B cell (primary cell): ENCODE measurements at regions of chr19 and their contacts with region 1.

Region 1: DNA sequence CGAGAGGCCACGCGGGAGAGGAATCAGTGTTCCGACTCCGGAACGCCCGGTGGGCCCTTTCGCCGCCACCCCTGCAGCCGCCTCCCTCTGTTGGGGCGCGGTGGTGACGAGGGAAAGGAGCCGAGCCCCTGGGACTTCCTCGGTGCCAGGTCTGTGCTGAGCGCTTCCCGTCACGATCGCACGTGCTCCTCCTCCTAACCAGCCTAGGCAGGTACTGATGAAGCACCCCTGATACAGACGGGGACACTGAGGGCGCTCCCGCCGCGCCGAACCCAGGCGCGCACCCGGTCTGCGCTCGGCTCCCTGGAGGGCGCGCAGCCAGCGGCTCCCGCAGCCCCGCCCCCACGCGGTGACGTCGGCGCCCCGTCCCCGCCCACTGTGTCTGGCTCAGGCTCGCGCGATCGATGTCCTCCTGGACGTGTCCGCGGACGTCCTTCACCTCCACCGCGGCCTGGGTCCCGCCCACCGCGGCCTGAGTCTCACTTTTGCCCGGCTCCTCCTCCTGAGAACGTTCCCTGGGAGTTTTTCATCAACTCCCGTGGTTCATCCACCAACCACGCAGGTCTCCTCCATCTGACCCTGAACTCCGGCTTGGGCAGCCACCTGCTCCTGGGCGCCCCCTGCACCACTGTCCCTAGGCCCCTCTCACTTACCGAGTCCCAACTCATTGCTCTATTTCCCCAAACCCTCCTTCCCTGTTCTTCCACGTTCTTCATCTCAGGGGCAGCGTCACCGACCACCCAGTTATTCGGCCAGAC is 2.6 kb upstream of the KLK15 start:
- DNase-seq: peak; percentile 84
- ATAC-seq: peak; percentile 94
- H3K4me3 ChIP-seq: peak overlapping the region in 4 of 5 experiments; percentile 51 to 67 (median 59)
- H3K4me3 Mint-ChIP-seq: peak overlapping the region; percentile 88
- H3K27ac ChIP-seq: no peak overlapping the region
- H3K27ac Mint-ChIP-seq: peak overlapping the region; percentile 73
- H3K4me1 ChIP-seq: peaks cover 11 to 14% of the 10 kb centered on the region in 2 donors
- H3K4me1 Mint-ChIP-seq: peaks cover 26% of the 10 kb centered on the region
- H3K27me3 ChIP-seq: peaks cover 0 to 48% (median 2%) of the 10 kb centered on the region in 4 experiments
- H3K27me3 Mint-ChIP-seq: peaks cover 45% of the 10 kb centered on the region
- CTCF ChIP-seq: no peak

Region 2: DNA sequence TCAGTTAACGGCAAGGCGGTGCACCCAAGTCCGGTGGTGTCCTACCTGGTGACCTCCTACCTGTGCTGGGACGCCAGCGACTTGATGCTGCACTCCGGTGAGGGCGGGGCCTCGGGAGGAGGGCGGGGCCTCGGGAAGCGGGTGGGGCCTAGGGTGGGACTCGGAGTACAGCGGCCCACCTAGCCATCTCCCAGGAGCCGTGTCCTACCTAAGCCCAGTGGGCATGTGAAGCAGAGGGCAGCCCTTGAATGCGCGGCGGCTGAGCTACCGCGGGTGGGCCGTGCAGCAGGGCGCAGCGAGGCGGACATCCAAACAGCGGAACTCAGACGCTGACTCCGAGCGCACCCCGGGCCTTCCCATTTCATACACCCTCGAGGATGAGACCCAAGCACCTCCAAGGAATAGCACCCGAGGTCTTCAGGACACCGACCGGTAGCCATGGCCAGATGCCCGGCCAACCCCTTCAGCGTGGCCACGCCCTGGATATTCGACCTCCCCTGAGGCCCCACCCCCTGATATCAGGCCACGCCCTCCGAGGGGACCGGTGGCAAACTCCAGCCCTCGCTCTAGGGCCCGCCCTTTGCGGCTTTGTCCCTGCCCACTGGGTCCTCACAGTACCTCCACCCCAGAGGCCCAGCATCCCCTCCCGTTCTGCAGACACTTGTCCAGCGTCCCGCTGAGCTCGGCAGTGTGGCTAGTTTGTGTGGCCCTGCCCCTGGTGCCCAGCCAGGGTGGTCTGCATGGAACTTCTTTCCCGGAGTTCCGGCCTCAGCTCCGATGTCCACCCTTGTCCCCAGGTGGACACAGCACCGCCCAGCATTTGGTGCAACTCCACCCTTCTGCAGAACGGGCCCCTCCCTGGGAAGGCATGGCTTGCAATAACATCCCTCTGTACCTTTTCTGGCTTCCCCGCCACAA is 17.8 kb before region 1 on chr19:
- CTCF ChIA-PET with region 1: no interaction called
- POLR2A ChIA-PET with region 1: no interaction called
- intact Hi-C with region 1: loop called (anchors 1 kb)
- DNase-seq: peak; percentile 77
- ATAC-seq: peak; percentile 69
- H3K4me3 ChIP-seq: peak overlapping the region in 4 of 5 experiments; percentile 60 to 76 (median 67)
- H3K4me3 Mint-ChIP-seq: peak overlapping the region; percentile 93
- H3K27ac ChIP-seq: peak overlapping the region in 1 of 2 donors; percentile 29
- H3K27ac Mint-ChIP-seq: peak overlapping the region; percentile 90
- H3K4me1 ChIP-seq: peaks cover 45 to 53% of the 10 kb centered on the region in 2 donors
- H3K4me1 Mint-ChIP-seq: peaks cover 63% of the 10 kb centered on the region
- H3K27me3 ChIP-seq: peaks cover 0 to 36% (median 2%) of the 10 kb centered on the region in 4 experiments
- H3K27me3 Mint-ChIP-seq: peaks cover 22% of the 10 kb centered on the region
- CTCF ChIP-seq: no peak

Region 3: DNA sequence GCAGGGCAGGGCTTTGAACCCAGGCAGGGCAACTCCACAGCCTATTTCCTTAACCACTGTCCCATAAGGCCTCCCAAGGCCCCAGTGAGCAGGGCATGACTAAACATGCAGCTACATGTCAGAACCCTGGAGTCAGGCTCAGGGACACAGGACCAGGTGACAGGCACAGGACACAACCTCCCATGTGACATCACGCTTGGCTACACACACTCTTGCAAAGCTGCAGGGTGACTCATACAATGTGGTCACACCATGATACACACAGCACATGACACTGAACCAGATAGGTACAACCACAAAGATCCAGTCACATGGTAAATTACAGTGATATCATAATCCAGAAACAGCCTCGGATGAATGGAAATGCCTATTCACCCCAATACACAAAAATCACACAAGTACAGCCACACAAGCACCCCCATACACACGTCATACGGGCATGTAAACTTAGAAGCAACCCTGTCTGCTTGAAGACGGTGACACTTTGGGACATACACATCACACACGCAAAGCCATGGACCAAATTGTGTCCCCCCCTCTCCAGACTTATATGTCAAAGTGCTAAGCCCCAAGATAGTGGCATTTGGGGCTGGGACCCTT is 60.7 kb after region 1 on chr19:
- CTCF ChIA-PET with region 1: no interaction called
- POLR2A ChIA-PET with region 1: no interaction called
- intact Hi-C with region 1: loop called (anchors 5 kb)
- DNase-seq: peak; percentile 90
- ATAC-seq: peak; percentile 90
- H3K4me3 ChIP-seq: no peak overlapping the region
- H3K4me3 Mint-ChIP-seq: peak overlapping the region; percentile 66
- H3K27ac ChIP-seq: peak overlapping the region; percentile 78 to 84
- H3K27ac Mint-ChIP-seq: peak overlapping the region; percentile 94
- H3K4me1 ChIP-seq: peaks cover 20 to 26% of the 10 kb centered on the region in 2 donors
- H3K4me1 Mint-ChIP-seq: peaks cover 53% of the 10 kb centered on the region
- H3K27me3 ChIP-seq: no peaks in the 10 kb centered on the region
- H3K27me3 Mint-ChIP-seq: no peaks in the 10 kb centered on the region
- CTCF ChIP-seq: no peak

Region 4: GRCh38 chr19:50975757-50976156 is 139.8 kb after region 1 on chr19:
- CTCF ChIA-PET with region 1: no interaction called
- POLR2A ChIA-PET with region 1: no interaction called
- intact Hi-C with region 1: no loop called
- DNase-seq: no peak
- ATAC-seq: no peak
- H3K4me3 ChIP-seq: no peak overlapping the region
- H3K4me3 Mint-ChIP-seq: no peak overlapping the region
- H3K27ac ChIP-seq: no peak overlapping the region
- H3K27ac Mint-ChIP-seq: no peak overlapping the region
- H3K4me1 ChIP-seq: no peaks in the 10 kb centered on the region
- H3K4me1 Mint-ChIP-seq: no peaks in the 10 kb centered on the region
- H3K27me3 ChIP-seq: peaks cover 0 to 16% (median 0%) of the 10 kb centered on the region in 4 experiments
- H3K27me3 Mint-ChIP-seq: peaks cover 63% of the 10 kb centered on the region
- CTCF ChIP-seq: no peak